ENCODE measurements at regions of chr9 and their contacts with region 1.

Region 1: GRCh38 chr9:5186416-5187169 is 1.2 kb upstream of the INSL6 start:
- DNase-seq: no peak
- ATAC-seq: peak; percentile 81
- H3K4me3 Mint-ChIP-seq: no peak overlapping the region
- H3K27ac Mint-ChIP-seq: no peak overlapping the region
- H3K4me1 Mint-ChIP-seq: peaks cover 12% of the 10 kb centered on the region
- H3K27me3 Mint-ChIP-seq: no peaks in the 10 kb centered on the region
- CTCF ChIP-seq: no peak

Region 2: GRCh38 chr9:5089737-5090136 is 96.9 kb before region 1 on chr9:
- CTCF ChIA-PET with region 1: no interaction called
- POLR2A ChIA-PET with region 1: no interaction called
- intact Hi-C with region 1: no loop called
- DNase-seq: no peak
- ATAC-seq: no peak
- H3K4me3 Mint-ChIP-seq: no peak overlapping the region
- H3K27ac Mint-ChIP-seq: no peak overlapping the region
- H3K4me1 Mint-ChIP-seq: no peaks in the 10 kb centered on the region
- H3K27me3 Mint-ChIP-seq: no peaks in the 10 kb centered on the region
- CTCF ChIP-seq: no peak

Region 3: DNA sequence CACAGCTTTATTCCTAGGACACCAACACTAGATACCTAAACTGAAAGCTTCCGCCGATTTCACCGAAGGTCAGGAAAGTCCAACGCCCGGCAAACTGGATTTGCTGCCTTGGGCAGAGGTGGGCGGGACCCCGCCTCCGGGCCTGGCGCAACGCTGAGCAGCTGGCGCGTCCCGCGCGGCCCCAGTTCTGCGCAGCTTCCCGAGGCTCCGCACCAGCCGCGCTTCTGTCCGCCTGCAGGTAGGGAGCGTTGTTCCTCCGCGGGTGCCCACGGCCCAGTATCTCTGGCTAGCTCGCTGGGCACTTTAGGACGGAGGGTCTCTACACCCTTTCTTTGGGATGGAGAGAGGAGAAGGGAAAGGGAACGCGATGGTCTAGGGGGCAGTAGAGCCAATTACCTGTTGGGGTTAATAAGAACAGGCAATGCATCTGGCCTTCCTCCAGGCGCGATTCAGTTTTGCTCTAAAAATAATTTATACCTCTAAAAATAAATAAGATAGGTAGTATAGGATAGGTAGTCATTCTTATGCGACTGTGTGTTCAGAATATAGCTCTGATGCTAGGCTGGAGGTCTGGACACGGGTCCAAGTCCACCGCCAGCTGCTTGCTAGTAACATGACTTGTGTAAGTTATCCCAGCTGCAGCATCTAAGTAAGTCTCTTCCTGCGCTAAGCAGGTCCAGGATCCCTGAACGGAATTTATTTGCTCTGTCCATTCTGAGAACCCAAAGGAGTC is 263.9 kb after region 1 on chr9 and contains the start of gene CD274:
- CTCF ChIA-PET with region 1: interaction called, 11 read pairs
- POLR2A ChIA-PET with region 1: interaction called, 4 read pairs
- intact Hi-C with region 1: no loop called
- DNase-seq: peak; percentile 76
- ATAC-seq: peak; percentile 83
- H3K4me3 Mint-ChIP-seq: peak within 1 kb of the TSS; percentile 95
- H3K27ac Mint-ChIP-seq: peak within 1 kb of the TSS; percentile 96
- H3K4me1 Mint-ChIP-seq: peaks cover 75% of the 10 kb centered on the region
- H3K27me3 Mint-ChIP-seq: no peaks in the 10 kb centered on the region
- CTCF ChIP-seq: no peak
- total RNA-seq, gene CD274: 47.4 and 48.9 TPM in 2 replicates

Region 4: DNA sequence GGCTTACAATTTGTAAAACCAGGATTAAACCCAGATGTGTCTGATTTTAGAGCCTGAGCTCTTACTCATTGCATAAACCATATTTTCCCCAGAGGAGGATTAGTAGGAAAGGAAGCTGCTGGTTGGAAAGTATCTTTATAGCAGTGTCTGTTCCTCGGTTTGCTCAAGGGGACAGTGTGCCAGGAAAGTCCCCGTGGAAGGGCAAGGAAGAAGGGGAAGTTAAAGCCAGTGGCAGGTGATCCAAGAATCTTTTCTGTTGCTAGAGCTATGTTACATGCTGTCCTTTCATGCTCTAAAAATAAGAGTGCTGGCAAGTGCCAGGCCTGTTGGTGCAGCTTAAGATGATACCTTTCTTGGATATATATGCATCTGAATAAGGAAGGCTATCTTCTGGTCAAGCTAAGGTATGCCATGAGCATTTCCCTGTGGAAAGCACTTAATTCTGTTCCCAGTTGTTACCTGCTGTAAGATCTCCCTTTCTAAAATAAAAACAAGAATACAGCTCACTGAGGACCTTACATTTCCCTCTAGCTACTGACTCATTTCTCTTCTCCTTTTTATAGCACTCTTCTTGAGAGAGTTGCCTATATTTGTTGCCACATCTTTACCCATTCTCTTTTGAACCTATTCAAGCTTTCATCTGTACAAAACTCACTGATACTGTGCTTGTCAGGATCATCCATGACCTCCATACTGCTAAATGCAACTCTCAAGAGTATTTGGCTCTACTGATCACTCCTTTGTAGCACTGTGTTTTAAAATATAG is 331.8 kb after region 1 on chr9:
- CTCF ChIA-PET with region 1: no interaction called
- POLR2A ChIA-PET with region 1: no interaction called
- intact Hi-C with region 1: no loop called
- DNase-seq: no peak
- ATAC-seq: peak; percentile 37
- H3K4me3 Mint-ChIP-seq: no peak overlapping the region
- H3K27ac Mint-ChIP-seq: no peak overlapping the region
- H3K4me1 Mint-ChIP-seq: peaks cover 35% of the 10 kb centered on the region
- H3K27me3 Mint-ChIP-seq: no peaks in the 10 kb centered on the region
- CTCF ChIP-seq: no peak

Region 5: DNA sequence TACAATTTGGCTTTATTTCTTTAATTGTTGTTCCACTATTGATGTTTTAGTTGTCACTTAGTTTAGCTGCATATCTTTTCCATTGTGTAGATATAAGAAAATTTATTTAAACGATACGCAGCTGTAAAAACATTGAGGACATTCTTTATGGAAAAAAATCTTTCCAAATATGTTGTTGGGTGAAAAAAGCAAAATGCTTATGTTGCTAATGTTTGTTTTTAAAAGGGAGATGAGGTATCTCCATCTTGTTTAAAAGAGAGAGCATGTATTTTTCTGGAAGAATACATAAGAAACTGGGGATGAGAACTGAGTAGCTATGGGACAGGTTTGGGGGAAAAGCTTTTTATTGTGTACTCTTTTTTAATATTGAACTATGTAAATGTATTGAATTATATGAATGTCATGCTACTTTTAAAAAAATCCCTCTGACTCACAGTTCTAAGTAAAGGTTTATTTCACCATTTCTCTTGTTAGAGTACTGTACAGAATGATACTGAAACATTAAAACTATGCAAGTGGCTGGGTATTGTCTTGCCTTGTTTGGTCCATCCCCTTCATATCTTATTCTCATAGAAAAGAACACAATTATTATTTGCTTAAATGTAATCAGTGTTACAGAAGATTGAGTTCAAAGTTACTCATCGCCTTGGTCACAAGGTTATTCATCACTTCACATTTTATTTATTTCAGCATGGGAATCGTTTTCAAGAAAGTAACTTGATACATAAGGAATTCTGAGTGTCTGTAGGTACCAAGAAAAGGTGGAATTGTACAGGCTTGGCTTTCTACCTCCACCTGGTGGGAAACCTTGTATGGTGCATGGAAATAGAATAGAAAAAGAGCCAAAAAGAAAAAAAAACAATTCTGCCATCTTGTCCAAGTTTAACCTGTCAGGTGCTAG is 528.2 kb after region 1 on chr9:
- CTCF ChIA-PET with region 1: interaction called, 5 read pairs
- POLR2A ChIA-PET with region 1: no interaction called
- intact Hi-C with region 1: loop called (anchors 1 kb)
- DNase-seq: no peak
- ATAC-seq: no peak
- H3K4me3 Mint-ChIP-seq: no peak overlapping the region
- H3K27ac Mint-ChIP-seq: no peak overlapping the region
- H3K4me1 Mint-ChIP-seq: peaks cover 36% of the 10 kb centered on the region
- H3K27me3 Mint-ChIP-seq: no peaks in the 10 kb centered on the region
- CTCF ChIP-seq: no peak

Region 6: DNA sequence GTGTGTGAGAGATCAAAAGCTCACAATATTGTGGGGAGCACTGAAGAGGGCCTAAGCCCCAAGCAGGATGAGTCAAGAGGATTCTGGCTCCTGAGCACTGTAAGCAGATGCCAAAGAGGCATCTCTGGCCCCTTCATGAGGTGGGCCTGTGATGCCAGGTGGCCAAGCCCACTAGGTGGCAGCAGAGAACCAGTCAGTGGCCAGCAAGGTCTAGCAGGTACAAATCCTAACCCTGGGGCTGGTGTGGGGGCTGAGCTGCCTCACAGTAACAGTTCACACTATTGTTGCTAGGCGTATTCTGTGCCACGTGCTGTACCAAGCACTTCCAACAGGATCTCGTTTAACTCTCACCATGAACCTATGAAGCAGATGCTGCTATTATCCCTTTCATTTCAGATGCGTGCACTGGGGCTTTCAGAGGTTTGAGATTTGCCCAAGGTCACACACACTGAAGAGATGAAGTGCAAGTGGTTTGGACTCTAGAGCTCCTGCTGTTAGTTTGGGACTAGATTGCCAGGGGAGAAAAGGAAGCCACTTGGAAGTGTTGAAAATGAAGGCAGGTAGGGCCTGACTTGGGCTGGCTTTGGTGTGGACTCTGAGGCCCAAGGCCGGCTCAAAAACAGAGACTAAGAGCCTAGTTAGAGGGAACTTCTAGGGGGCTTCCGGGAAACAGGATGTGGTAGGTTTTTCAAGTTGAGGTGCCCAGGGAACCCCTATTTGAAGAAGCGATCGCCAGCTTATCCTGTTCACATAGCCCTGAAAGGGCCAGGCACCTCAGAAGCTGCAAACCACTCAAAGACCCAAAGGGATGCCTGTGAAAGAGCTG is 699.7 kb after region 1 on chr9:
- CTCF ChIA-PET with region 1: no interaction called
- POLR2A ChIA-PET with region 1: no interaction called
- intact Hi-C with region 1: loop called (anchors 5 kb)
- DNase-seq: peak; percentile 59
- ATAC-seq: peak; percentile 90
- H3K4me3 Mint-ChIP-seq: no peak overlapping the region
- H3K27ac Mint-ChIP-seq: no peak overlapping the region
- H3K4me1 Mint-ChIP-seq: no peaks in the 10 kb centered on the region
- H3K27me3 Mint-ChIP-seq: no peaks in the 10 kb centered on the region
- CTCF ChIP-seq: peak; percentile 52